HCT116 (cell line): ENCODE measurements at regions of chr3 and their contacts with region 1.

Region 1: GRCh38 chr3:18847583-18848197 is 300.6 kb upstream of the KCNH8 start:
- DNase-seq: peak; percentile 6
- ATAC-seq: peak; percentile 74
- H3K4me3 ChIP-seq: no peak overlapping the region
- H3K27ac ChIP-seq: no peak overlapping the region
- H3K4me1 ChIP-seq: no peaks in the 10 kb centered on the region
- H3K27me3 ChIP-seq: no peaks in the 10 kb centered on the region
- CTCF ChIP-seq: peak in 2 of 3 experiments; percentile 29 to 50; a peak in 3 of 6 replicates
- POLR2A ChIP-seq: no peak
- RAD21 ChIP-seq: 0 out of 2 replicates have a peak, but pooled peaks have one; percentile 8

Region 2: GRCh38 chr3:18723206-18723810 is 124.4 kb before region 1 on chr3:
- CTCF ChIA-PET with region 1: no interaction called
- POLR2A ChIA-PET with region 1: no interaction called
- RAD21 ChIA-PET with region 1: no interaction called
- intact Hi-C with region 1: no loop called
- DNase-seq: no peak
- ATAC-seq: no peak
- H3K4me3 ChIP-seq: no peak overlapping the region
- H3K27ac ChIP-seq: no peak overlapping the region
- H3K4me1 ChIP-seq: no peaks in the 10 kb centered on the region
- H3K27me3 ChIP-seq: no peaks in the 10 kb centered on the region
- CTCF ChIP-seq: no peak
- POLR2A ChIP-seq: no peak
- RAD21 ChIP-seq: no peak

Region 3: GRCh38 chr3:18988614-18989229 is 141.0 kb after region 1 on chr3:
- CTCF ChIA-PET with region 1: no interaction called
- POLR2A ChIA-PET with region 1: no interaction called
- RAD21 ChIA-PET with region 1: no interaction called
- intact Hi-C with region 1: loop called (anchors 5 kb)
- DNase-seq: no peak
- ATAC-seq: no peak
- H3K4me3 ChIP-seq: no peak overlapping the region
- H3K27ac ChIP-seq: no peak overlapping the region
- H3K4me1 ChIP-seq: no peaks in the 10 kb centered on the region
- H3K27me3 ChIP-seq: no peaks in the 10 kb centered on the region
- CTCF ChIP-seq: peak in 2 of 3 experiments; percentile 18 to 49; a peak in 2 of 6 replicates
- POLR2A ChIP-seq: no peak
- RAD21 ChIP-seq: peak; percentile 40; the same call in 1 of the 2 replicates

Region 4: DNA sequence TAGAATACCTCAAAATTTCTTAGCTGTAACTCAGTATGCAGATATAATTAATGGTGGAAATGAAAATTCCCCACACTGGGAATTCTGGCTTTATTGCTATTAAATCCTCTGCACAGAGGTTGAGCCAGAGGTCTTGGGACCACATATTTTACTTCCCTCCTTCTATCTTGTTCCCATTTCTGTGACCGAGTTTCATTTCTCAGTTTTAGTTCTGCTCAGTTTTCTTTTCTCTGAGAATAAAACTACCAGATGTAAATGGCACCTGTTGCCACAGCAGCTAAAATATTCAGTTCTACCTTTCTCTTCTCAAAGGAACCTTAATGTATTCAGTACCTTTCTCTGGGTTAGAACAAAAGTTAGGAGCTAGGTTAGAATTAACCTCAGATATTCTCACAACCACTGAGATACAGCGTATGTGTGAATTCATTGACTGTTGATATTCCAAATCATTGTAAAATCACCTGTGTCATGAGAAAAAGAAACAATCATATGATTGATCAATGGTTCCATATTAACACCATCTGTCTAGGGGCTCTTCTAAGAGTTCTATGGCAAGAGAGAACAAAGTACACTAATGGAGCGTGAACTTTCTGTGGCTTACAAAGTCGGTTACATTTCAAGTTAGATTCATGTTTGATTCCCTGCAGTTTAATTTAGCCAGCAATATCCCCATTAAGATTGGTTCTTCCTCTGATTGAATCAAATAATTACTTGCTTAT is 712.2 kb after region 1 on chr3:
- CTCF ChIA-PET with region 1: no interaction called
- POLR2A ChIA-PET with region 1: no interaction called
- RAD21 ChIA-PET with region 1: no interaction called
- intact Hi-C with region 1: no loop called
- DNase-seq: no peak
- ATAC-seq: no peak
- H3K4me3 ChIP-seq: no peak overlapping the region
- H3K27ac ChIP-seq: no peak overlapping the region
- H3K4me1 ChIP-seq: no peaks in the 10 kb centered on the region
- H3K27me3 ChIP-seq: no peaks in the 10 kb centered on the region
- CTCF ChIP-seq: no peak
- POLR2A ChIP-seq: no peak
- RAD21 ChIP-seq: no peak